Activated T-helper 1 cell treated with anti-CD3 and anti-CD28 coated beads, Interleukin-12 subunit alpha, Interleukin-12 subunit beta, Interleukin-2, Interleukin-4 antibody, amounts not matched to agents 30 ng/mL and 10 ng/mL and 1 ng/mL, durations not matched to agents 14 hours and 24 hours and 36 hours (primary cell): ENCODE measurements at regions of chr6 and their contacts with region 1.

Region 1: GRCh38 chr6:37051138-37052026 is 45.9 kb downstream of the FGD2 start:
- DNase-seq: peak; percentile 82
- H3K4me3 Mint-ChIP-seq: peak overlapping the region; percentile 92
- H3K27ac Mint-ChIP-seq: peak overlapping the region; percentile 99
- H3K4me1 Mint-ChIP-seq: peaks cover 70% of the 10 kb centered on the region
- H3K27me3 Mint-ChIP-seq: no peaks in the 10 kb centered on the region

Region 2: DNA sequence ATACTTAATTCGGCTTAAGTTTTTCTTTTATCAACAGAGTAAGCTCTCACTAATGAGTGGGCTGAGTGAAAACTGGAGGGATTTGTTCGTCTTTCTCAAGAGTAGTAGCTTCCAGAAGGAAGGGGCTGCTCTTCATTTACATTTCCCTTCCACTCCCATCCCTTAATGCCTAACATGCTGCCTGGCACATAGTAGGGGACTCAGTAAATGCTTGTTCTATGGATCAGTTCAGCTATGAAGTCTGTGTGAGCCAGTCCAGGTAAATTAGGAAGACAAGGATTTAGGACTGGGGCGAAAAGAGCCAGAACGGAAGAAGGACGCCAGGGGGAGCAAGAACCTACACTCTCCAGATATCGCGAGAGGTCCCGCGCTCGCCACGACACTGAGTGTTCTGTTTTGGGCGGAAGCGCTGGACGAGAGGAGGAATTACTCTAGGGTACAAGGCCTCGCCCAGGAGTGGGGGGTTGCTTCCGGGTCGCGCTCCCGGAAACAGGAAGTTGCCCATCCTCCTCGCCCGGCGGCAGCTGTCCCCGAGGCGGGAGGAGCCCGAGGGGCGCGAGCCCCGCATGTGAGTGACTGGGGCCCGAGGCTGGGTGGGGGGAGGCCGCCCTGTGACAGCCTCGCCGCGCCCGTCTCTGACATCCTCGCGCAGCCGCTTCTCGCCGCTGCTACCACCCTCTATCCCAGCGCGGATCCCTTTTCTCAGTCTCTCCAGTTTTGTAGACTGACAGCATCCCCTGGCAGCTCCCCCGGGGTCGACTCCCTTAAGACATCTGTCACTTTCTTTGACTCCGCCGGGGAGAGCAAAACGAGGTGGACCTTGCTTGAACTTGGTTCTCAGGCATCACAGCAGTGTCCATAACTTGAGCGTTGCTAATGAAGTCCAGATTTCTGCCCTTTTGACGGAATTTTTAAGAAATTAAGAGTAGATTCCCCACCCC is 165.7 kb before region 1 on chr6 and contains the start of gene C6orf89:
- intact Hi-C with region 1: loop called (anchors 1 kb)
- DNase-seq: peak; percentile 94
- H3K4me3 Mint-ChIP-seq: peak within 1 kb of the TSS; percentile 91
- H3K27ac Mint-ChIP-seq: peak within 1 kb of the TSS; percentile 82
- H3K4me1 Mint-ChIP-seq: peaks cover 37% of the 10 kb centered on the region
- H3K27me3 Mint-ChIP-seq: no peaks in the 10 kb centered on the region
- total RNA-seq, gene C6orf89: 31.5 and 31.8 TPM in 2 replicates

Region 3: DNA sequence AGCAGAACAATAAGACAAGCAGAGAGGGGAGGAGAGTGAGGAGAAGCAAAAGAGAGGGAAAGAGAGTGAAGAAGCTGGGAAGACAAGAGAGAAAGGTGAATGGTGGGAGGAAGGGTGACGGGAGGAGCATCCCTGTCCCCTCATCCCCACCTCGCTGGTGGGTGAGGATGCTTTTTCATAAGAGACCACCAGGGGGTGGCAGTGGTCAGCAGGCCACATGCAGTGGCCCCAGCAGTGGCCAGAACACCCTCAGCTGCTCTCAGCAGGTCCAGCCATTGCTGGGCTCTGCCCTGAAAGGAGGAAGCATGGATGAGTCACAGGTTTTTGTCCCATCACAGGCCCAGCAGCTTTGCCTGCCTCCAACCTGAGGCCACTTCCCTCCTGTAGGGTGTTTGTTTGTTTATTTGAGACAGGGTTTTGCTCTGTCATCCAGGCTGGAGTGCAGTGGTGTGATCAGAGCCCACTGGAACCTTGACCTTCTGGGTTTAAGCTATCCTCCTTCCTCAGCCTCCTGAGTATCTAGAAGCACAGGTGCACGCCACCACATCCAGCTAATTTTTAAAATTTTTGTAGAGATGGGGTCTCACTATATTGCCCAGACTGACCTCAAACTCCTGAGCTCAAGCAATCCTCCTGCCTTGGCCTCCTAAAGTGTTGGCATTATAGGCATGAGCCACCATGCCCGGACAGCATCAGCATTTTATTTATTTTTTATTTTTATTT is 22.0 kb before region 1 on chr6:
- intact Hi-C with region 1: loop called (anchors 1 kb)
- DNase-seq: no peak
- H3K4me3 Mint-ChIP-seq: no peak overlapping the region
- H3K27ac Mint-ChIP-seq: peak overlapping the region; percentile 79
- H3K4me1 Mint-ChIP-seq: peaks cover 63% of the 10 kb centered on the region
- H3K27me3 Mint-ChIP-seq: no peaks in the 10 kb centered on the region

Region 4: GRCh38 chr6:37102279-37103168 is 51.1 kb after region 1 on chr6:
- intact Hi-C with region 1: loop called (anchors 1 kb)
- DNase-seq: peak; percentile 70
- H3K4me3 Mint-ChIP-seq: peak overlapping the region; percentile 56
- H3K27ac Mint-ChIP-seq: peak overlapping the region; percentile 85
- H3K4me1 Mint-ChIP-seq: peaks cover 58% of the 10 kb centered on the region
- H3K27me3 Mint-ChIP-seq: no peaks in the 10 kb centered on the region

Region 5: GRCh38 chr6:37137201-37138090 is 86.1 kb after region 1 on chr6:
- intact Hi-C with region 1: loop called (anchors 1 kb)
- DNase-seq: peak; percentile 6
- H3K4me3 Mint-ChIP-seq: peak overlapping the region; percentile 47
- H3K27ac Mint-ChIP-seq: peak overlapping the region; percentile 95
- H3K4me1 Mint-ChIP-seq: peaks cover 51% of the 10 kb centered on the region
- H3K27me3 Mint-ChIP-seq: no peaks in the 10 kb centered on the region

Region 6: DNA sequence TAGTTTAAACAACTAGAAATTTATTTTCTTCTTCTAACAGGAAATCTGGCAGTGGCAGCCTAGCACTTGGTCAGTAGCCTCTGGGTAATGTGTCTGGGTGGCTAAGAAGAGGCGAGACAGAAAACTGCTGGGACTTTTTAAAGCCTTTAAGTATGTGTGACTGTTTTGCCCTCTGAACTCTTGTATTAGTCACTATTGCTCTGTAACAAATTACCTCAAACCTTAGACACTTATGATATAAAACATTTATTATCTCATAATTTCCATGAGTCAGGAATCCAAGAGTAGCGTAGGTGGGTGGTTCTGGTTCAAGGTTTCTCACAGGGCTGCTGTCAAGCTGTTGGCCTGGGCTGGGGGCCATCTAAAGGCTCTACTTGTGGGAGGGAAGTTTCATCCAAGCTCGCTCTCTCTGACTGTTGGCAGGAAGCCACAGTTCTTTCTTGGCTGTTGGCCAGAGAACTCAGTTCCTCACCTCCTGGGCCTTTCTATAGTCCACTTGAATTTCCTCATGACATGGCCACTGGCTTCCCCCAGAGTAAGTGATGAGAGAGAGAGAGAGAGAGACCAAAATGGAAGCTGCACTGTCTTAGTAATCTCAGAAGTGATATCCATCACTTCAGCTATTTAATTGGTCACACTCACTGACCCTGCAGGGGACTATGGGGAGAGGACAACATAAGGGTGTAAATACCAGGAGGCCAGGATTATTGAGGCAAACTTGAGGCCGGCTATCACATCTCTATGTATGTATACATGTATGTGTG is 188.8 kb after region 1 on chr6:
- intact Hi-C with region 1: loop called (anchors 1 kb)
- DNase-seq: peak; percentile 49
- H3K4me3 Mint-ChIP-seq: peak overlapping the region; percentile 38
- H3K27ac Mint-ChIP-seq: peak overlapping the region; percentile 90
- H3K4me1 Mint-ChIP-seq: peaks cover 64% of the 10 kb centered on the region
- H3K27me3 Mint-ChIP-seq: no peaks in the 10 kb centered on the region